ENCODE measurements at regions of chr10 and their contacts with region 1.

Region 1: DNA sequence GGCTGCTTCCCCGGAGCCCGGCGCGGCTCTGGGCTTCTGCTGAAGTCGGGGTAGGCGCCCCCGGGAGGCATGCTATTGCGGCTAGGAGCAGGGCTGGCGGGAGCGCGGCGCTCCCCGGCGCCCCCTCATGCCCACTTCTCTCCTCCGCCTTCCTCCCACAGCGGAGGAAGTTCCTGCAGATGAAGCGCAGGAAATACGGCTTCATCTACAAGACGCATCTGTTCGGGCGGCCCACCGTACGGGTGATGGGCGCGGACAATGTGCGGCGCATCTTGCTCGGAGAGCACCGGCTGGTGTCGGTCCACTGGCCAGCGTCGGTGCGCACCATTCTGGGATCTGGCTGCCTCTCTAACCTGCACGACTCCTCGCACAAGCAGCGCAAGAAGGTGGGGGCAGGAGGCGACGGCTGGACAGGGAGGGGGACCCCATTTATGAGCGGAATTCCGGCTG is 479 bp downstream of the CYP26A1 start:
- DNase-seq: no peak
- ATAC-seq: no peak
- H3K4me3 ChIP-seq: peak overlapping the region; percentile 32 to 49 (median 44)
- H3K27ac ChIP-seq: no peak overlapping the region
- H3K4me1 ChIP-seq: peaks cover 12 to 29% of the 10 kb centered on the region in 2 donors
- H3K27me3 ChIP-seq: peaks cover 64 to 71% (median 66%) of the 10 kb centered on the region in 3 donors
- CTCF ChIP-seq: no peak
- POLR2A ChIP-seq: no peak

Region 2: DNA sequence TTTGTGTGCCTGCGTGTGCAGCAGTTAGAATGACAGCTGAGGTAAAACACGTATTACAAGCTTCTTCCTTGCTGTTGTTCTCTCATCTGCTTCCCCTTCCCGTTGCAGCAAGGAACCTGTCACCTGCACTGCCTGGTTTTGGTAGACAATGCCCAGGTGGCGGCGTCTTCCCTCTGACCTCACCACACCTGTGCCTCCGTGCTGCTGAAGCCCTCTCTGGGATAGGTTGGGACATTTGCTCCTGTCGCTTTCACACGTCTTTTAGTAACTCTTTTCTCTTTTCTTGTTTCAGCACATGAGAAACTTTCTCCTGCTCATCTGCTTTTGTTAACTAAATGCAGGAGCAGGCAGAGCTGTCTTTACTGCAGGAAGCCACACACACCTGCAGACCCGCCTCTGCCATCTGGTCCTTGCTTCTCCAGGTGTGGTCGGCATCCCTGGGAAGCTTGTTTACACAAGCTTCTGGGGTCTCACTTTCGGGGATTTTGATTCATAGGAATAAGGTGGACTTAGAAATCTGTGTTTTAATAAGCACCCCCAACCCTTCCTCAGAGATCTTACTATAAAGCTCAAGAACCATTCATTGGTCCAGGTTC is 286.5 kb before region 1 on chr10:
- in situ Hi-C with region 1: no loop called
- intact Hi-C with region 1: no loop called
- DNase-seq: no peak
- ATAC-seq: no peak
- H3K4me3 ChIP-seq: no peak overlapping the region
- H3K27ac ChIP-seq: no peak overlapping the region
- H3K4me1 ChIP-seq: peaks cover 0 to 4% of the 10 kb centered on the region in 2 donors
- H3K27me3 ChIP-seq: no peaks in the 10 kb centered on the region
- CTCF ChIP-seq: no peak
- POLR2A ChIP-seq: no peak

Region 3: GRCh38 chr10:93062514-93063143 is 11.5 kb before region 1 on chr10:
- in situ Hi-C with region 1: no loop called
- intact Hi-C with region 1: no loop called
- DNase-seq: no peak
- ATAC-seq: peak in 1 of 2 donors; percentile 35
- H3K4me3 ChIP-seq: peak overlapping the region in 3 of 4 donors; percentile 33 to 42 (median 37)
- H3K27ac ChIP-seq: no peak overlapping the region
- H3K4me1 ChIP-seq: peaks cover 0 to 3% of the 10 kb centered on the region in 2 donors
- H3K27me3 ChIP-seq: peaks cover 14 to 22% (median 21%) of the 10 kb centered on the region in 3 donors
- CTCF ChIP-seq: peak in 4 of 5 experiments; percentile 5 to 51 (median 30)
- POLR2A ChIP-seq: no peak

Region 4: DNA sequence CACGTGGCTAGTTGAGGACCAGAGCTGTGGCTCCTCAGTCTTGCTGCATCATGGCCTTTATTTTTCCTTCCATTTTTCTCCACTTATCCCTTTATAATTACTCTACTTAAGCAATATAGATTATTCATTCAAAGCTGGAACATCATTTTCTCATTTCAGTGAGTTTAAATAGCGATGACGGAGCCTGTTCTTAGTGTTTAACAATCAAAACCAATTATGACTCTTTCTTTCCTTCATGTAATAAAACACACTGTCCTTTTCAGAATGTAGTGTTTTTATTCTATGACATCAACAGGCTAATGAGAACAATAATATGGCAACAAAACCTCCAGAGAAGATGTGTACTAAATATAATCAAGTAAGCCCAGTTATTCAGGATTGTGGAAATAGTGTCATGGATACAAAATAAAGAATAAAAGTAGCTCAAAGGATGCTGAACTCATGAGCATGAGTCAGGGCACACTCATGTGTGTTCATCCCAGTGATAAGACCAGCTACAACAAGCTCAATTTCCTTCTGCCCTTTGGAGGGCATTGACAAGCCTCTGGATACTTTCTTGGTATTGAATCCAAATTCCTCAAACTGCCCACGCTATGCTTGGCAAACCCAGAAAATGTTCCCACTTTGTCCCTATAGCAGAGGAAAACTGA is 187.9 kb after region 1 on chr10:
- in situ Hi-C with region 1: no loop called
- intact Hi-C with region 1: no loop called
- DNase-seq: no peak
- ATAC-seq: no peak
- H3K4me3 ChIP-seq: no peak overlapping the region
- H3K27ac ChIP-seq: no peak overlapping the region
- H3K4me1 ChIP-seq: no peaks in the 10 kb centered on the region
- H3K27me3 ChIP-seq: no peaks in the 10 kb centered on the region
- CTCF ChIP-seq: no peak
- POLR2A ChIP-seq: no peak

Region 5: GRCh38 chr10:93352638-93353383 is 278.6 kb after region 1 on chr10:
- in situ Hi-C with region 1: no loop called
- intact Hi-C with region 1: loop called (anchors 10 kb)
- DNase-seq: no peak
- ATAC-seq: no peak
- H3K4me3 ChIP-seq: no peak overlapping the region
- H3K27ac ChIP-seq: no peak overlapping the region
- H3K4me1 ChIP-seq: no peaks in the 10 kb centered on the region
- H3K27me3 ChIP-seq: no peaks in the 10 kb centered on the region
- CTCF ChIP-seq: peak; percentile 36 to 72 (median 54)
- POLR2A ChIP-seq: no peak

Measured in gastrocnemius medialis (tissue), 4 donors.